Activated B cell treated with CpG ODN at 0.5 μM for 24 hours (primary cell): ENCODE measurements at regions of chr5 and their contacts with region 1.

Region 1: GRCh38 chr5:12659686-12660085 is 755.4 kb upstream of the CTNND2 start:
- DNase-seq: no peak
- ATAC-seq: no peak
- H3K4me3 Mint-ChIP-seq: no peak overlapping the region
- H3K27ac Mint-ChIP-seq: no peak overlapping the region
- H3K4me1 Mint-ChIP-seq: no peaks in the 10 kb centered on the region
- H3K27me3 Mint-ChIP-seq: no peaks in the 10 kb centered on the region
- CTCF ChIP-seq: no peak

Region 2: DNA sequence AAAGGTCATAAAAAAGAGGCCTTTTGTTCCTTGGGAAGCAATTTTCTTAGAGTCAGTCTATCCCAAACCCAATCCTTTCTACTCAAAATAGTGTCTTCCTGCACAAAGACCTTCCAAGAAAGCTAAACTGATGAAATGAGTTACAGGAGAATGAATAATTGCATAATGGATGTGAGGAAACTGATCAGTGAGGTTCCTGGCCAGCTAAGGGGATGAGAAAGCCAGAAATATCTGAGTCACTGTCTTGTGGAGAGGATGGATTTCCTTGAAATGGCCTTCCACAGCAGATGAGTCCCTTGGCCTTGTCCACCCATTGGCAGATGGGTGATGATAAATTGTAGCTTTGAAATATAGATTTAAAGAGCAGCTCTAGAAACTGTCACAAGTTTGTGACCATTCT is 528.7 kb after region 1 on chr5:
- CTCF ChIA-PET with region 1: no interaction called
- POLR2A ChIA-PET with region 1: no interaction called
- intact Hi-C with region 1: loop called (anchors 10 kb)
- DNase-seq: no peak
- ATAC-seq: no peak
- H3K4me3 Mint-ChIP-seq: no peak overlapping the region
- H3K27ac Mint-ChIP-seq: no peak overlapping the region
- H3K4me1 Mint-ChIP-seq: no peaks in the 10 kb centered on the region
- H3K27me3 Mint-ChIP-seq: no peaks in the 10 kb centered on the region
- CTCF ChIP-seq: no peak

Region 3: DNA sequence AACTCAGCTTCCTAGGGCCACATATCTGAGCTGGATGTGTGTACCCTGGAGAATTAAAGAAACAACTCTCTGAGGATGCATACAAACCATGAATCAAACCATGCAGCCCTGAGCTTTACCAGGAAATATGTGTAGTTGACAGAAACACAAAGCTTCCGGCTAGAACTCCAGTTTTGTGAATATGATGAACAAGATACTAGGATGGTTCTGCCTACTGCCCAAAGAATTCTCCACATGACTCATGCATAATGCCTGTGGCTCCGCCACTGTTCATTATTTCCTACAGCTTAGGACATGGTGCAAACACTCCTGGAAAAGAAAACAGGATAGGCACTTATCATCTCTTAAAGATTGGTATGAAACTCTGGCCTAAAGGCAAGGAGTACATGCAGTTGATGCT is 941.4 kb after region 1 on chr5:
- CTCF ChIA-PET with region 1: no interaction called
- POLR2A ChIA-PET with region 1: no interaction called
- intact Hi-C with region 1: no loop called
- DNase-seq: no peak
- ATAC-seq: no peak
- H3K4me3 Mint-ChIP-seq: no peak overlapping the region
- H3K27ac Mint-ChIP-seq: no peak overlapping the region
- H3K4me1 Mint-ChIP-seq: no peaks in the 10 kb centered on the region
- H3K27me3 Mint-ChIP-seq: no peaks in the 10 kb centered on the region
- CTCF ChIP-seq: no peak